ENCODE measurements at regions of chr9 and their contacts with region 1.

Region 1: GRCh38 chr9:91193658-91194391 is 167.9 kb downstream of the AUH start:
- DNase-seq: peak; percentile 93
- ATAC-seq: peak; percentile 80
- H3K4me3 ChIP-seq: peak overlapping the region; percentile 52 to 68 (median 56); a peak in 5 of 6 replicates
- H3K27ac ChIP-seq: peak overlapping the region; percentile 100
- H3K4me1 ChIP-seq: peaks cover 78% of the 10 kb centered on the region
- H3K27me3 ChIP-seq: no peaks in the 10 kb centered on the region
- CTCF ChIP-seq: peak; percentile 42
- EP300 ChIP-seq: peak in 1 of 2 experiments; percentile 91; a peak in 2 of 4 replicates
- POLR2A ChIP-seq: peak; percentile 79 to 94
- RAD21 ChIP-seq: peak; percentile 65

Region 2: DNA sequence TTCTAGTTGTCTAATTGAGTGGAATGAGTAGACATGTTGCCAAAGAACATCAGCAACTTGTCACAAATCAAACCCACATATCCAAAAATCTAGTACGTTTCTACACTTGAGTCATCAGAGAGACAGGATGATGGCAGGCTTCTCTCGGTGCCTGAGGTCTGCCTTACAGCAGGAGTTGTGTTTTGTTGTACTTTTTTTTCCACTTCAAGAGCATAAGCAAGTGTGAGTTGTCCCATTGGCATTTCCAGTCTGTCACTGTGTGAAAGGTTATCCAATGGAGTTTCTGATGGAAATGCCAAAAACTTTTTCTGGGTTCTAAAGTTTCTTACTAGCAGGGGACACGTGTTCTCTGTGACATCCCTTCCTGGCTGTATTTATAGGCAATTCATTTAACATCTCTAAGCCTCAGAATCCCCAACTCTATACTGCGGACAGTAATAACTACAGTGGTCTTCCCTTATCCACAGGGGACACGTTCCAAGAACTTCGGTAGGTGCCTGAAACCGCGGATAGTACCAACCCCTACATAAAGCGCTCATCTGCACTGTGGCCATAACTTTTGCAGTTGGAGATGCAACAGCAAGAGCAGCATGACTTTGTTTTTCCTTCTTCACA is 145.7 kb before region 1 on chr9:
- CTCF ChIA-PET with region 1: no interaction called
- POLR2A ChIA-PET with region 1: interaction called, 4 read pairs
- in situ Hi-C with region 1: loop called (anchors 10 kb)
- intact Hi-C with region 1: no loop called
- DNase-seq: no peak
- ATAC-seq: no peak
- H3K4me3 ChIP-seq: no peak overlapping the region
- H3K27ac ChIP-seq: no peak overlapping the region
- H3K4me1 ChIP-seq: peaks cover 50% of the 10 kb centered on the region
- H3K27me3 ChIP-seq: no peaks in the 10 kb centered on the region
- CTCF ChIP-seq: no peak
- EP300 ChIP-seq: no peak
- POLR2A ChIP-seq: no peak
- RAD21 ChIP-seq: no peak

Region 3: GRCh38 chr9:91071185-91071990 is 122.4 kb before region 1 on chr9:
- CTCF ChIA-PET with region 1: no interaction called
- POLR2A ChIA-PET with region 1: interaction called, 15 read pairs
- in situ Hi-C with region 1: no loop called
- intact Hi-C with region 1: loop called (anchors 10 kb)
- DNase-seq: peak; percentile 76
- ATAC-seq: peak; percentile 88
- H3K4me3 ChIP-seq: peak overlapping the region; percentile 33 to 66 (median 50)
- H3K27ac ChIP-seq: peak overlapping the region; percentile 71
- H3K4me1 ChIP-seq: peaks cover 62% of the 10 kb centered on the region
- H3K27me3 ChIP-seq: no peaks in the 10 kb centered on the region
- CTCF ChIP-seq: no peak; the same call in 1 of the 2 replicates
- EP300 ChIP-seq: peak in 1 of 2 experiments; percentile 50; a peak in 2 of 4 replicates
- POLR2A ChIP-seq: peak; percentile 18 to 61; a peak in 3 of 4 replicates
- RAD21 ChIP-seq: no peak

Region 4: GRCh38 chr9:91207729-91208418 is 14.0 kb after region 1 on chr9:
- CTCF ChIA-PET with region 1: interaction called, 3 read pairs
- POLR2A ChIA-PET with region 1: interaction called, 178 read pairs
- in situ Hi-C with region 1: no loop called
- intact Hi-C with region 1: loop called (anchors 1 kb)
- DNase-seq: peak; percentile 88
- ATAC-seq: peak; percentile 83
- H3K4me3 ChIP-seq: peak overlapping the region in 2 of 3 experiments; percentile 20 to 41; a peak in 3 of 6 replicates
- H3K27ac ChIP-seq: peak overlapping the region; percentile 91
- H3K4me1 ChIP-seq: peaks cover 83% of the 10 kb centered on the region
- H3K27me3 ChIP-seq: no peaks in the 10 kb centered on the region
- CTCF ChIP-seq: no peak
- EP300 ChIP-seq: peak; percentile 34 to 83; a peak in 2 of 4 replicates
- POLR2A ChIP-seq: 0 out of 4 replicates have a peak, but pooled peaks of 1 of the 2 experiments have one; percentile 18
- RAD21 ChIP-seq: no peak

Region 5: DNA sequence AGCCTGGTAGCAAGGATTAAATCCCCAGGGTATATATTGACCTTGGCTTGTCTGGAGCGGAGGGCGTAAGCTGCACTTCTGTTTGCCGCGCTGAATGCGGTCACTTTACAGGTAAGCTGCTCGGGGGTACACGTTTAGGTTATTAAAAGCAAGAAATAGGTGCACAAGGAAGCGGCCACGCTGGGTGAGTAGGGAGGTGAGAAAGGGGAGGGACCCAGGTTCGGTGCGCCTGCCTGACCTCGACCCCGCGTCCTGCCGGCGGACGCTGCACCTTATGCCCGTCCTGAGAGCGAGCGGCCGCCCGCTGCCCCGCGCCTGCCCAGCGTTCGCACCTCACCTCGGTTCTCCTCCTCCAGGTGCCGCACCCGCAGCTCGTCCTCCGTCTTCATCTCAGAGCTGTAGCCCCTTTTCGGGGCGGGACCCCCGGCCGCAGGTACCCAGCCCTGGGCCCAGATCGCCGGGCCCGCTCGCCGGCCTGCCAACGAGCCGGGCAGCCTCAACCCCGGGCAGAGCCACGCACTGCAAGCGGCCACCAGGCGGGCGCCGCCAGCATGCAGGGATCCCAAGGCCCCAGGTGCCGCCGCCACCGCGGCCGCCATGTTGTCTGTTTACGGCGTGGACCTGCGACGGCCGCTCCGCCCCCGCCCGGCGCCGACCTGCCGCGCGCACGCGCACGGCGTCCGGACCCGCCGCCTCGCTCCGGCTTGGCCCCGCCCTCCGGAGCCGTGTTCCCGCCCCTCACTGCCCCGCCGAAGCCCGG is 167.6 kb after region 1 on chr9 and contains the start of gene AUH:
- CTCF ChIA-PET with region 1: no interaction called
- POLR2A ChIA-PET with region 1: interaction called, 8 read pairs
- in situ Hi-C with region 1: no loop called
- intact Hi-C with region 1: loop called (anchors 5 kb)
- DNase-seq: peak; percentile 60
- ATAC-seq: peak; percentile 92
- H3K4me3 ChIP-seq: peak within 1 kb of the TSS; percentile 95 to 99 (median 98)
- H3K27ac ChIP-seq: peak within 1 kb of the TSS; percentile 84
- H3K4me1 ChIP-seq: peaks cover 45% of the 10 kb centered on the region
- H3K27me3 ChIP-seq: no peaks in the 10 kb centered on the region; a peak in 1 of 5 replicates
- CTCF ChIP-seq: no peak
- EP300 ChIP-seq: no peak
- POLR2A ChIP-seq: peak; percentile 61 to 70
- RAD21 ChIP-seq: peak; percentile 46; the same call in 1 of the 2 replicates
- total RNA-seq, gene AUH: 31.9 and 35.7 TPM in 2 replicates